ENCODE measurements at regions of chr6 and their contacts with region 1.

Region 1: GRCh38 chr6:44074439-44075136 is 52.7 kb downstream of the MRPL14 start:
- DNase-seq: peak; percentile 52
- H3K4me3 ChIP-seq: no peak overlapping the region
- H3K27ac ChIP-seq: peak overlapping the region; percentile 22 to 64
- H3K4me1 ChIP-seq: peaks cover 11% of the 10 kb centered on the region
- H3K27me3 ChIP-seq: no peaks in the 10 kb centered on the region
- CTCF ChIP-seq: peak; percentile 92 to 96 (median 93)
- POLR2A ChIP-seq: no peak

Region 2: GRCh38 chr6:43667245-43668150 is 407.1 kb before region 1 on chr6:
- intact Hi-C with region 1: loop called (anchors 2 kb)
- DNase-seq: peak; percentile 77
- H3K4me3 ChIP-seq: no peak overlapping the region
- H3K27ac ChIP-seq: peak overlapping the region; percentile 33 to 73
- H3K4me1 ChIP-seq: peaks cover 15% of the 10 kb centered on the region
- H3K27me3 ChIP-seq: no peaks in the 10 kb centered on the region
- CTCF ChIP-seq: peak; percentile 81 to 96 (median 91)
- POLR2A ChIP-seq: no peak

Region 3: GRCh38 chr6:43733471-43734293 is 340.9 kb before region 1 on chr6:
- intact Hi-C with region 1: no loop called
- DNase-seq: no peak
- H3K4me3 ChIP-seq: no peak overlapping the region
- H3K27ac ChIP-seq: peak overlapping the region; percentile 8 to 74
- H3K4me1 ChIP-seq: peaks cover 4% of the 10 kb centered on the region
- H3K27me3 ChIP-seq: no peaks in the 10 kb centered on the region
- CTCF ChIP-seq: no peak
- POLR2A ChIP-seq: no peak

Region 4: GRCh38 chr6:43972913-43973300 is 101.7 kb before region 1 on chr6:
- intact Hi-C with region 1: loop called (anchors 5 kb)
- DNase-seq: peak; percentile 75
- H3K4me3 ChIP-seq: no peak overlapping the region
- H3K27ac ChIP-seq: no peak overlapping the region
- H3K4me1 ChIP-seq: no peaks in the 10 kb centered on the region
- H3K27me3 ChIP-seq: no peaks in the 10 kb centered on the region
- CTCF ChIP-seq: no peak
- POLR2A ChIP-seq: no peak

Region 5: GRCh38 chr6:44002593-44003344 is 71.8 kb before region 1 on chr6:
- intact Hi-C with region 1: no loop called
- DNase-seq: peak; percentile 32
- H3K4me3 ChIP-seq: peak overlapping the region in 1 of 2 donors; percentile 21
- H3K27ac ChIP-seq: no peak overlapping the region
- H3K4me1 ChIP-seq: peaks cover 5% of the 10 kb centered on the region
- H3K27me3 ChIP-seq: peaks cover 2% of the 10 kb centered on the region
- CTCF ChIP-seq: peak in 2 of 4 experiments; percentile 29 to 55
- POLR2A ChIP-seq: no peak

Measured in prostate gland (tissue), 2 donors.